T-cell (primary cell): ENCODE measurements at regions of chr7 and their contacts with region 1.

Region 1: DNA sequence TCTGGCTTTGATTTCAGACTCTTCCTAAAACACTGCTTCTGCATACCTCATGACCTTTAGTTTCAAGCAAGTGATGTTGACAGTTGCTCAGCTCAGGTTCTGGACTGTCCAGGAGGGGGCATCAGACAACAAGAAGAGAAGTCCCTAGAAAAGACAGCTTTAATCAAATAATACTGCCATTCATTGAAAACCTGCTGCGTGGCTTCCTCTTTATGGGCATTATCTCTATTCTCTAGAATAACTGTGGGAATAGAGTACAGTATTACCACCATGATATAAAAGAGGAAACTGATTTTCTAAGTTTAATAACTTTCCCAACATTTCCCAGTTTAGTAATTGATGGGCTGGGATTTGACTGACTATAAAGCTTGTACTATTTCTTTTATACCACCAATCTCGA is 170.4 kb downstream of the SNX13 start:
- DNase-seq: peak in 30 of 35 experiments; percentile 8 to 60 (median 29)
- ATAC-seq: peak in 3 of 4 experiments; percentile 33 to 44 (median 42)
- H3K4me3 ChIP-seq: no peak overlapping the region
- H3K4me3 Mint-ChIP-seq: no peak overlapping the region
- H3K27ac ChIP-seq: no peak overlapping the region
- H3K27ac Mint-ChIP-seq: no peak overlapping the region
- H3K4me1 ChIP-seq: no peaks in the 10 kb centered on the region
- H3K4me1 Mint-ChIP-seq: peaks cover 0 to 9% (median 0%) of the 10 kb centered on the region in 3 donors
- H3K27me3 ChIP-seq: no peaks in the 10 kb centered on the region
- H3K27me3 Mint-ChIP-seq: no peaks in the 10 kb centered on the region

Region 2: GRCh38 chr7:17523813-17524741 is 245.8 kb before region 1 on chr7:
- CTCF ChIA-PET with region 1: no interaction called
- POLR2A ChIA-PET with region 1: interaction called in 1 of 2 experiments, 11 read pairs
- DNase-seq: no peak
- ATAC-seq: no peak
- H3K4me3 ChIP-seq: no peak overlapping the region
- H3K4me3 Mint-ChIP-seq: no peak overlapping the region
- H3K27ac ChIP-seq: no peak overlapping the region
- H3K27ac Mint-ChIP-seq: no peak overlapping the region
- H3K4me1 ChIP-seq: peaks cover 0 to 5% of the 10 kb centered on the region in 2 experiments
- H3K4me1 Mint-ChIP-seq: peaks cover 3 to 9% (median 5%) of the 10 kb centered on the region in 3 donors
- H3K27me3 ChIP-seq: no peaks in the 10 kb centered on the region
- H3K27me3 Mint-ChIP-seq: no peaks in the 10 kb centered on the region

Region 3: DNA sequence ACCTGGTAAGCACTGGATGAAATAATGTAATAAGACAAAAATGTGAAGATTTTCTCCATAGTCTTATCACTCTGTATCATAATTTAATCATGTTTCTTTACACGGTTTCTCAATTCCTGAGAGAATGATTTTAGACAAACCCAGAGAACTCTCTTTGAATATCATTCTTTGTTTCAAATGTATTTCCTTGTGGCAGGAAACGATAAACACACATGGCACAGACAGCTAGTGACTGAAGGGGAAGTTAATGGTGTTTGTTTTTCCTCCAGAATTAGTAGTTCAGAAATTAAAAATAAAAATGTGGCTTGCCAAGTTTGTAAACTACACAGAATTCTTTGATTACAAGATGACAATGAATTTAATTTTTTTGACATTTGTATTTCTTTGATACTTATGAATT is 421.4 kb after region 1 on chr7:
- CTCF ChIA-PET with region 1: no interaction called
- POLR2A ChIA-PET with region 1: interaction called in 1 of 2 experiments, 10 read pairs
- DNase-seq: no peak
- ATAC-seq: no peak
- H3K4me3 ChIP-seq: no peak overlapping the region
- H3K4me3 Mint-ChIP-seq: no peak overlapping the region
- H3K27ac ChIP-seq: no peak overlapping the region
- H3K27ac Mint-ChIP-seq: no peak overlapping the region
- H3K4me1 ChIP-seq: no peaks in the 10 kb centered on the region
- H3K4me1 Mint-ChIP-seq: no peaks in the 10 kb centered on the region
- H3K27me3 ChIP-seq: no peaks in the 10 kb centered on the region
- H3K27me3 Mint-ChIP-seq: peaks cover 0 to 1% of the 10 kb centered on the region in 2 donors

Region 4: DNA sequence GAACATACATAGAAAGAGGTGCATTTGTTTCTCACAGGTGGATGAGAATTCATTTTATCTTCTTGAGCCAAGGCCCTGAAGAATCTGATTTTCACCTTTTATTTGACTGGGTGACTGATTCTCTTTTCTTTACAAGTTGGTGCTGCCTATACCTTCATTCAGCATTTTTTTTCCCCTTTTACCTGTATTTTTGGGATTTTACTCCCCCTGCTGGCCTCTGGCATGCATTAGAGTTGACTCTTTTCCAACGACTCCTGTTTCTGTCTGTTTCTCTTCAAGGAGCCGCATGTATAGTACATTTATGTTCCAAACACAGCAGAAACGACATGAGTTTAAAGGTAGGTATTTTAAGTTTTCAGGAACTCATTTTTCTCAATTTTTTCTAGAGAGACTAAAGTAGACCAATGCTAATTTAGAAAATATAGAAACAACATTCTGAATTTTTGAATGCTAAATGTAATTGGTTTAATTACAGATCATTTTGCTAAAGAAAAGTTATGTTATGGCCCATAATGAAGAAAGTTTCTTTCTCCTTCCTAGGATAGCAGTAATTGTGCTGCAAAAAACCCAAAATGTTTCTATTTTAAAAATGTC is 575.8 kb after region 1 on chr7:
- CTCF ChIA-PET with region 1: interaction called, 9 to 11 read pairs
- POLR2A ChIA-PET with region 1: no interaction called
- DNase-seq: peak in 15 of 35 experiments; percentile 1 to 59 (median 7)
- ATAC-seq: no peak
- H3K4me3 ChIP-seq: no peak overlapping the region
- H3K4me3 Mint-ChIP-seq: no peak overlapping the region
- H3K27ac ChIP-seq: no peak overlapping the region
- H3K27ac Mint-ChIP-seq: no peak overlapping the region
- H3K4me1 ChIP-seq: no peaks in the 10 kb centered on the region
- H3K4me1 Mint-ChIP-seq: no peaks in the 10 kb centered on the region
- H3K27me3 ChIP-seq: no peaks in the 10 kb centered on the region
- H3K27me3 Mint-ChIP-seq: peaks cover 0 to 7% of the 10 kb centered on the region in 2 donors